ENCODE measurements at regions of chr17 and their contacts with region 1.

Region 1: GRCh38 chr17:49496183-49496866 is 1.2 kb downstream of the NGFR start:
- DNase-seq: peak; percentile 81
- H3K4me3 Mint-ChIP-seq: peak overlapping the region; percentile 66
- H3K27ac Mint-ChIP-seq: no peak overlapping the region
- H3K4me1 Mint-ChIP-seq: peaks cover 23% of the 10 kb centered on the region
- H3K27me3 Mint-ChIP-seq: peaks cover 74% of the 10 kb centered on the region

Region 2: DNA sequence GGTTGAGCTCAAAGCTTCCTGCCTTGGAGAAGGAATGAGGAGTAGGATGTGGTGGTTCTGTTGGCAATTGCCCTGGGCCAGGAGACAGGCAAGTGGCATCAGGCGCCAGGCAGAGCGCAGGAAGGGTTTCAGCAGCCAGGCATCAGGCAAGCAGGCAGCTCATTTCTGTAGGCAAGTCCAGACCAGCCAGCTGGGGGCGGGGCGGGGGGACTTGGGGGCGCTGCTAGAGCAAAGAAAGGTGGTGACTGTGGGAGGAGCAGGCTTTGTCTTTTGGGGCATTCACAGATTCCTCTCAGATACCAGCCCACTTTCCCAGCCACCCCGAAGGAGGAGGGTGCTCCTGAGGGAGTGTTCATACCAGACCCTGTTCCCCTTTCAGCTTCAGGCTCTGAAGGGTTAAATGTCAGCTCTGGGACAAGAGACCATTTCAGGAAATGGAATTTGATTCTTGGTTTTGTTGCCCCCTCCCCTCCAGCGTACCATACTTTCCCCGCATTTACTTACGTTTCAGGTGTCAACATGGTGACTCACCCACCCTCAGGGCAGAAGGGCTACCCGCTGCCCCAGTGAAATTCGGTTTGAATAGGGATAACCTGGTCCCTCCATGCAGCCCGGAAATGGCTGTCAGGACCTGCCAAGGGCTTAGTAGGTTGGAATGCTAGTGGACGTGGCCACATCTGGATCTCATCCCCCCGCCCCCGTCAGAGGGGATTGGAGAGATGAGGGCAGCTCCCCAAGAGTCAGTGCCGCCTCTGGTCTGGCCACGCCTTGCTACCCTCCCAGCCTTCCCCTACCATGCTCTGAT is 11.9 kb after region 1 on chr17:
- CTCF ChIA-PET with region 1: interaction called, 11 read pairs
- POLR2A ChIA-PET with region 1: no interaction called
- DNase-seq: no peak
- H3K4me3 Mint-ChIP-seq: no peak overlapping the region
- H3K27ac Mint-ChIP-seq: no peak overlapping the region
- H3K4me1 Mint-ChIP-seq: no peaks in the 10 kb centered on the region
- H3K27me3 Mint-ChIP-seq: peaks cover 20% of the 10 kb centered on the region